CD4-positive, alpha-beta memory T cell (primary cell): ENCODE measurements at regions of chr17 and their contacts with region 1.

Region 1: DNA sequence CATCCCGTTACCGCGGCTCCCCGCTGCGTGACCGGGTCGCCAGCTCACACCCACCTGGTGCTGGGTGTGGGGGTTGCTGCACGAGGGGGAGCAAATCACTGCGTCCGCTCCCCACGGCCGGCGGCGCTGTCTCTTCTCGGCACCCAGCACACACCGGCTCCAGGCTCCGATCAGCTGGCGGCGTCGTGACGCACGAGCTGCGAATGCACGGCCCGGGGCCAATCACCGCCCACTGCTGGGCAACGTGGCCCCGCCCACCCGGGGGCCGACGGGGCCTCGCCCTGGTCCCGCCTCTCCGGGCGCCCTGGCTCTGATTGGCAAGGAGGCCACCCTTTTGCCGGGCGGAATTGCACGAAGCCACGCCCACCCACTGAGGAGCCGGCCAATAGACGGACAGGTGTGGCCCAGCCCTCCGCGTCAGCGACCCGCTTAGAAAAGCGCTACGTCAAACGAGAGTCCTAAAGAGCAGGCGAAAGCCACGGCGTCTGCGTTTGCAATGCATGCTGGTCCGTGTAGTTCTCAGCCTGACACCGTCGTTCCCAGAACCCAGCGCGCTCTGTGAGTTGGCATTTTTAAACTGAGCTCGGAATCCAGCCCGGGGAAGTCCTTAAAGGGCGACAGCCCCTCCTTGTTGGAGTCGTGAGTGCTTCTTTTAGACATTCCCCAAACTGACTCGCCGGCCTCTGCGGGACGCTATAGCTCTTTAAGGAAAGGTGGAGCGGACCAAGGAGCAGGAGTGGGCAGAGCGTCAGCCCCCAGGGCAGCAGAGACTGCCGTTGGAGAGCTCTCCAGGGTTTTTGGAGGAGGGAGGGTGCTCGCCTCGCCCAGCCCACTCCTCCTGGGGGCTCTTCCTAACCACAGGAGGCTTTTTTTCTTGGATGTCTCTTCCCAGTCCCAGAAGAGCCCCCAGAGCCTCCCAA is 6.2 kb upstream of the TLCD2 start:
- DNase-seq: peak; percentile 100
- H3K4me3 ChIP-seq: peak overlapping the region; percentile 76 to 100
- H3K4me3 Mint-ChIP-seq: peak overlapping the region; percentile 90 to 96 (median 94)
- H3K27ac ChIP-seq: peak overlapping the region; percentile 89
- H3K27ac Mint-ChIP-seq: peak overlapping the region; percentile 89 to 98 (median 96)
- H3K4me1 ChIP-seq: peaks cover 31% of the 10 kb centered on the region
- H3K4me1 Mint-ChIP-seq: peaks cover 14 to 55% (median 35%) of the 10 kb centered on the region in 4 donors
- H3K27me3 ChIP-seq: no peaks in the 10 kb centered on the region
- H3K27me3 Mint-ChIP-seq: no peaks in the 10 kb centered on the region

Region 2: DNA sequence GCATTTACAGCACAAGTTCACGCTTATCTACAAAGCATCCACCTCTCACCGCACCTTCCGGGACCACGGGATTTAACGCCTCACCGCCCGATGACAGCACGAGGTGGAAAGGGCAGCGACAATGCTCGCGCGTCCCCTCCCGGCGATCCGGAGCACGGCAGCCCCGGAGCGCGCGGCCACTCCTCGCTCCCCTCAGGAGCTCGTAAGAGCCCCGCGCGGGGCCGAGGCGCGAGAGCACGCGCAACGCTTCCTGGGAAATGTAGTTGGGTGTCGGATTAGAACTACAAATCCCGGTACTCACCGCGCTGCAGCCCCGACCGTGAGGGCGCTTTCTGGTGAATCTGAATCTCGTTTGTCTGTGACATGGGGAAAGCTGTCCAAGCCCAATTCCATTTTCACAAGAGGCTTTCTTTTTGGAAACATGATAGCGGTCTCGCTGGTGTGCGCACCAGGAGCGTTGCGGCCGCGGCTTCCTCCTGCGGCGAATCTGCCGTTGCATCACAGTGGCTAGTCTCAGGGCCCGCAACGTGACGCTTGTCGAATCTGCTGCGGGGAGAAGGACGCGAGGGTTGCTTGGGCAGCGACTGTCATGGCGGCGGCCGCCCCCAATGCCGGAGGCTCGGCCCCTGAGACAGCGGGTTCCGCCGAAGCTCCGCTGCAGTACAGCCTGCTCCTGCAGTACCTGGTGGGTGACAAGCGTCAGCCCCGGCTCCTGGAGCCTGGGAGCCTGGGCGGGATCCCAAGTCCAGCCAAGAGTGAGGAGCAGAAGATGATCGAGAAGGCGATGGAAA is 719.6 kb before region 1 on chr17 and contains the start of gene TIMM22:
- CTCF ChIA-PET with region 1: no interaction called
- POLR2A ChIA-PET with region 1: no interaction called
- intact Hi-C with region 1: loop called (anchors 2 kb)
- DNase-seq: peak; percentile 94 to 95 (median 95)
- H3K4me3 ChIP-seq: peak within 1 kb of the TSS; percentile 84 to 99
- H3K4me3 Mint-ChIP-seq: peak within 1 kb of the TSS; percentile 96 to 99 (median 98)
- H3K27ac ChIP-seq: peak within 1 kb of the TSS; percentile 83
- H3K27ac Mint-ChIP-seq: peak within 1 kb of the TSS; percentile 96 to 99 (median 99)
- H3K4me1 ChIP-seq: peaks cover 18% of the 10 kb centered on the region
- H3K4me1 Mint-ChIP-seq: peaks cover 13 to 34% (median 22%) of the 10 kb centered on the region in 4 donors
- H3K27me3 ChIP-seq: no peaks in the 10 kb centered on the region
- H3K27me3 Mint-ChIP-seq: no peaks in the 10 kb centered on the region
- total RNA-seq, gene TIMM22: 12.3 to 13.2 TPM

Region 3: DNA sequence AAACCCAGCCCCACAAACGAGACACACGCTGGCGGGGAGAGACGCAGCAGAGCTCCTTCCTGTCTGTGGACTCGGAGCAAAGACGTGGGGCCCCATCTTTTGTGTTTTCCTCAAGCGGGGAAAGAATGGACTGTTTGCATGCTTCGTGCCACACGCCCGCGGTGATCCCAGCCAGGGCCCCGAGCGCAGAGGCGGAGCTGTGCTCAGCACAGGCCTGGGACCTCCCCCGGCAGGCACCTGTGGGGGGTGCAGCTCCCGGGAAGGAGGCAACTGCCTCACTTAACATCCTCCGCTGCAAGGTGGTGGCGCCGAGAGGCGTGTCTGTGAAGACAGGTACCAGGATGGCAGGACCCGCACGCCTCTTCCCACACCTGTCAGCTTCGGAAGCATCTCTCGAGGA is 417.7 kb before region 1 on chr17:
- CTCF ChIA-PET with region 1: no interaction called
- POLR2A ChIA-PET with region 1: no interaction called
- intact Hi-C with region 1: no loop called
- DNase-seq: peak; percentile 33 to 51 (median 41)
- H3K4me3 ChIP-seq: peak overlapping the region in 1 of 2 donors; percentile 25
- H3K4me3 Mint-ChIP-seq: peak overlapping the region; percentile 36 to 67 (median 52)
- H3K27ac ChIP-seq: no peak overlapping the region
- H3K27ac Mint-ChIP-seq: peak overlapping the region in 2 of 7 donors; percentile 15 to 35
- H3K4me1 ChIP-seq: peaks cover 58% of the 10 kb centered on the region
- H3K4me1 Mint-ChIP-seq: peaks cover 15 to 60% (median 32%) of the 10 kb centered on the region in 4 donors
- H3K27me3 ChIP-seq: no peaks in the 10 kb centered on the region
- H3K27me3 Mint-ChIP-seq: no peaks in the 10 kb centered on the region

Region 4: DNA sequence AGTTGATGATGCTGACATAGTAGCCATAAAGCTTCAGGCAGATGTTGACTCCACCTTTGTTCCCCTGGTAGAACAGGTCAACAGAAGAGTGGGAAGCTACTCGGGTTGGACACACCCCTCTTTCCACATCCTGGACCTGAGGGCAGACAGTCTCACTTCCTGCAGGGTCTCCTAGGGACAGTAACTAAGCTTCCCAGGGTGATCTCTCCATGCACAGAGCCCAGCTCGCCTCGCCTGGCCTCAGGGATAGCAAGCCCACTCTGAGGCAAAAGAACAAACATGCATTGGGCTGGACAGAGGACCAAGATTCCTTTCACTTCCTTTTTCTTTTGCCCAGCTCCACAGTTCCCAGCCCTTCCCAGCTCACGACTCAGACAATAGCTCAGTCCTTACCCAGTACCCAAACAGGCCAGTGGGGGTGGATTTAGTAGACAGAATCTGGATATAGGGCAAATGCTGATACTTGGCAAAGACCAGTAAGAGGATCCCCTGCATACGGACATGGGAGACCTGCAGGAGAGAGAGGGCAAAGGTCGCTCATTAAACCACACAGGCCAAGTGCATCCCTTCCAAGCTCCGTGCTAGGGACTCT is 206.9 kb before region 1 on chr17:
- CTCF ChIA-PET with region 1: no interaction called
- POLR2A ChIA-PET with region 1: no interaction called
- intact Hi-C with region 1: no loop called
- DNase-seq: no peak
- H3K4me3 ChIP-seq: no peak overlapping the region
- H3K4me3 Mint-ChIP-seq: no peak overlapping the region
- H3K27ac ChIP-seq: no peak overlapping the region
- H3K27ac Mint-ChIP-seq: peak overlapping the region in 4 of 7 donors; percentile 17 to 71 (median 56)
- H3K4me1 ChIP-seq: peaks cover 6% of the 10 kb centered on the region
- H3K4me1 Mint-ChIP-seq: peaks cover 7 to 26% (median 19%) of the 10 kb centered on the region in 4 donors
- H3K27me3 ChIP-seq: no peaks in the 10 kb centered on the region
- H3K27me3 Mint-ChIP-seq: no peaks in the 10 kb centered on the region

Region 5: DNA sequence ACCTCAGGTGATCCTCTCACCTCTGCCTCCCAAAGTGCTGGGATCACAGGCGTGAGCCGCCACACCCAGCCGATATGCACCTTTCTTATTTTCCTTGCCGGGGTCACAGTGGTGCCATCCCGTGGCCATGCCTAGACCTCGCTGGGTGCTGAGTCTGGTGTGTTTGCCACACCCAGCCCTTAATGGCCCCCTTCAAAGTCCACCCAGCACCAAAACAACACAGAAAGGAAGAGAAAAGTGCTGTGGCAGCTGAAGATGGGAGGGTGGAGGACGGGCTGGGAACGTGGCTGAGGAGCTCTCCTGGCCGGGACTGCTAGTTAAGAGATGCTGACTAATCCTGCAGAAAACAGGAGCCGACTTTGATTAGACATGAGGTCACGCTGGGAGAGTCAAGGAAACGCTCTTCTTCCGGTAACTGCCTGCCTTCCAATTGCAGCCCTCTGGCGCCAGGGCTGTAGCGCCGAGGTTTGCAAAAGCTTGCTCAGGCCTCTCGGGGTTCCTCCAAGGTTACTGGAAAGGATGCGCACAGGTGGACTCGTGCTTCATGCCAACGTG is 98.6 kb before region 1 on chr17:
- CTCF ChIA-PET with region 1: no interaction called
- POLR2A ChIA-PET with region 1: no interaction called
- intact Hi-C with region 1: no loop called
- DNase-seq: no peak
- H3K4me3 ChIP-seq: no peak overlapping the region
- H3K4me3 Mint-ChIP-seq: peak overlapping the region in 1 of 8 donors; percentile 11
- H3K27ac ChIP-seq: no peak overlapping the region
- H3K27ac Mint-ChIP-seq: no peak overlapping the region
- H3K4me1 ChIP-seq: no peaks in the 10 kb centered on the region
- H3K4me1 Mint-ChIP-seq: no peaks in the 10 kb centered on the region
- H3K27me3 ChIP-seq: no peaks in the 10 kb centered on the region
- H3K27me3 Mint-ChIP-seq: no peaks in the 10 kb centered on the region

Region 6: DNA sequence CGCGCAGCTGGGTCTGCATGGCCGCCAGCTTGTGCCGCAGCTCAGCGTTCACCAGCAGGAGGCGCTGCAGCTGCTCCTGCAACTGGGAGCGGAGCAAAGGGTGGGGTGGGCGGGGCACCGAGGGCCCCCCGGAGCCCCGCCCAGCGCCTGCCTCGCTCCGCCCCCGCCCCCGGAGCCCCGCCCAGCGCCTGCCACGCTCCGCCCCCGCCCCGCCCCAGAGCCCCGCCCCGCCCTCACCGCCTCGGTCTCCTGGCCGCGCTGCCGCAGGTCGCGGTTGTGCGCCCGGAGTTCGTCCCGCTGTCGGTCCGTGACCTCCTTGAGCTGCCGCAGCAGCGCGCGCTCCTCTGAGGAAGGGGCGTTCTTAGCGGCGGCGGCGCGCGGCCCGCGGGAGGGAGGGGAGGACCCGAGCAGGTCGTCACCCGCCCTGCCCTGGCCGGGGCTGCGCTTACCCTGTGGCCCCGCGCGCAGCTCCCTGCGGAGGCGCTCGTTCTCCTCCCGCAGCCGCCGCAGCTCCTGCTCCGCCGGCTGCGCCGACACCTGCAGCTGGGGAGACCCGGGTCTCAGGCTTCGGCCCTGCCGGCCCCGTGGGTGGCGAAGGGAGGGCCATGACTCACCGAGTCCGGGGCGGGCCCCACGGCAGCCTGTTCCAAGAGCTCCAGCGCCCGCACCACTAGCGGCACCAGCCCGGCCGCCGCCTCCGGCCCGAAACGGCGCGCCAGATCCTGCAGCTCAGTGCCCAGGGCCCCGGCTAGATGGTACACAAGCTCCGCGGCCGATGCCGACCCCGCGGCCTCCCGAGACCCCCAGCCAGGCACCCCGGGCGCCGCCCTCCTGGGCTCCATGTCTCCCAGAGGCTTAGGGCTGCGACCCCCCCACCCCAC is 67.1 kb before region 1 on chr17:
- CTCF ChIA-PET with region 1: interaction called, 7 read pairs
- POLR2A ChIA-PET with region 1: interaction called, 36 read pairs
- intact Hi-C with region 1: loop called (anchors 2 kb)
- DNase-seq: peak; percentile 92 to 95 (median 93)
- H3K4me3 ChIP-seq: peak overlapping the region in 1 of 2 donors; percentile 63
- H3K4me3 Mint-ChIP-seq: peak overlapping the region; percentile 24 to 78 (median 68)
- H3K27ac ChIP-seq: peak overlapping the region; percentile 53
- H3K27ac Mint-ChIP-seq: peak overlapping the region in 3 of 7 donors; percentile 35 to 90 (median 53)
- H3K4me1 ChIP-seq: peaks cover 23% of the 10 kb centered on the region
- H3K4me1 Mint-ChIP-seq: peaks cover 6 to 20% (median 12%) of the 10 kb centered on the region in 4 donors
- H3K27me3 ChIP-seq: no peaks in the 10 kb centered on the region
- H3K27me3 Mint-ChIP-seq: no peaks in the 10 kb centered on the region

Region 7: GRCh38 chr17:1684378-1685189 is 31.8 kb before region 1 on chr17 and contains the start of gene PRPF8:
- CTCF ChIA-PET with region 1: interaction called, 3 read pairs
- POLR2A ChIA-PET with region 1: interaction called, 79 read pairs
- intact Hi-C with region 1: loop called (anchors 1 kb)
- DNase-seq: peak; percentile 98 to 99 (median 99)
- H3K4me3 ChIP-seq: peak within 1 kb of the TSS; percentile 83 to 96
- H3K4me3 Mint-ChIP-seq: peak within 1 kb of the TSS; percentile 97 to 99 (median 99)
- H3K27ac ChIP-seq: peak within 1 kb of the TSS; percentile 96
- H3K27ac Mint-ChIP-seq: peak within 1 kb of the TSS; percentile 93 to 100 (median 99)
- H3K4me1 ChIP-seq: peaks cover 29% of the 10 kb centered on the region
- H3K4me1 Mint-ChIP-seq: peaks cover 32 to 56% (median 41%) of the 10 kb centered on the region in 4 donors
- H3K27me3 ChIP-seq: no peaks in the 10 kb centered on the region
- H3K27me3 Mint-ChIP-seq: no peaks in the 10 kb centered on the region
- total RNA-seq, gene PRPF8: 429 to 464 TPM

Region 8: DNA sequence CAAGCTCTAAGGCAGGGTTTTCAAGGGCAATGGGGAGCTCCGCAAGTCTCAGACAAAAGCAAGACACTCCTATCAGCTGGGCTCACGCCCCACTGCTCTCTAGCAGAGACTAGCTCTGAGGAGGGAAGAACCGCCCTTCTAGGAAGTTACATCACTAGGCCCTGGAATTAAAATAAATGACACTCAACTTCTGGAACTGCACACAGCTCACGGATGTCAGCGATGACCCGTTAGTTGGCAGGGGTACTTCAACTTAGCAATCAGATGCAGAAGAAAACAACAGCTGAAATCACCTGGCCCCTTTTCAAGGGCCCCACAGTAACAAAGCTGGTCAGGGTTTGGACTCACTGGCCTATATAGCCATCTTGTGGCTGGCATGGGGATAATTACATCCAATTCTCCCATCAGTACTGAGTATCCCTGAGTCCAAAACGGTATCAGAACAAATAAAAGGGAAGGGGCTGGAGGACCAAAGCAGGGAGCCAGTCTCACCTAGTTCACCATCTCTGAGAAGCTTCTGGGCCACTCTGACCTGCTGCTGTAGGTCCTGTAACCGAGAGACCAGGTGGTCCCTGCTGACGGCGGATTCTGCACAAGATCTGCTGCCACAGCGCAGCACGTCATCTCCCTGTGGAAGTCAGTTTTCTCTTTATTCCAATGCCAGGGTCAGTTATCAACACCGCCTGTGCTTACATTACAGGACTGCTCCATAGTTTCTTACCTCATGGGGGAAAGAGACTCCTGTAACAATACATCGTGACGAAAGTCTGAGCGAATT is 67.7 kb after region 1 on chr17:
- CTCF ChIA-PET with region 1: interaction called, 161 read pairs
- POLR2A ChIA-PET with region 1: interaction called, 19 read pairs
- intact Hi-C with region 1: loop called (anchors 1 kb)
- DNase-seq: peak in 4 of 5 donors; percentile 18 to 37 (median 31)
- H3K4me3 ChIP-seq: no peak overlapping the region
- H3K4me3 Mint-ChIP-seq: no peak overlapping the region
- H3K27ac ChIP-seq: no peak overlapping the region
- H3K27ac Mint-ChIP-seq: peak overlapping the region in 4 of 7 donors; percentile 10 to 74 (median 48)
- H3K4me1 ChIP-seq: no peaks in the 10 kb centered on the region
- H3K4me1 Mint-ChIP-seq: peaks cover 0 to 10% (median 1%) of the 10 kb centered on the region in 4 donors
- H3K27me3 ChIP-seq: no peaks in the 10 kb centered on the region
- H3K27me3 Mint-ChIP-seq: no peaks in the 10 kb centered on the region

Region 9: DNA sequence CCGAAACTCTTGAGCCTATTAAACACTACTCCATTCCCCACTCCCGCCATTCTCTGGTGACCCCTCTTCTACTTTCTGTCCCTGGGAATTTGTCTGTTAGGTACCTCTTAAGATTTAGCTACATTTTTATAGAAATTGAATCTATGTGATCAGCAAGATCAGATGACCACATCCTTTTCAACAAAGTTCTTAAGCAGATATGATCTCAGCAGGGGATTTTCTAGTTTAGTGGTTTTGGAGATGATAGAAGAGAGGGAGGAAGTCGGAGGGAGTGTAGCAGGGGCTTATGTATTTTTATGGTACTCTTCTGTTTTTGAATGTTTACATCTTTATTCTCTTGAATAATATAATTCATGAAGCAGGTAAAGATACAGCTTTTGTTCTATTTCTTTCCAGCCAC is 154.3 kb after region 1 on chr17:
- CTCF ChIA-PET with region 1: interaction called, 30 read pairs
- POLR2A ChIA-PET with region 1: interaction called, 16 read pairs
- intact Hi-C with region 1: loop called (anchors 1 kb)
- DNase-seq: peak; percentile 59 to 84 (median 76)
- H3K4me3 ChIP-seq: peak overlapping the region in 1 of 2 donors; percentile 12
- H3K4me3 Mint-ChIP-seq: peak overlapping the region; percentile 75 to 88 (median 84)
- H3K27ac ChIP-seq: peak overlapping the region; percentile 65
- H3K27ac Mint-ChIP-seq: peak overlapping the region; percentile 92 to 99 (median 98)
- H3K4me1 ChIP-seq: peaks cover 62% of the 10 kb centered on the region
- H3K4me1 Mint-ChIP-seq: peaks cover 46 to 75% (median 55%) of the 10 kb centered on the region in 4 donors
- H3K27me3 ChIP-seq: no peaks in the 10 kb centered on the region
- H3K27me3 Mint-ChIP-seq: no peaks in the 10 kb centered on the region

Region 10: DNA sequence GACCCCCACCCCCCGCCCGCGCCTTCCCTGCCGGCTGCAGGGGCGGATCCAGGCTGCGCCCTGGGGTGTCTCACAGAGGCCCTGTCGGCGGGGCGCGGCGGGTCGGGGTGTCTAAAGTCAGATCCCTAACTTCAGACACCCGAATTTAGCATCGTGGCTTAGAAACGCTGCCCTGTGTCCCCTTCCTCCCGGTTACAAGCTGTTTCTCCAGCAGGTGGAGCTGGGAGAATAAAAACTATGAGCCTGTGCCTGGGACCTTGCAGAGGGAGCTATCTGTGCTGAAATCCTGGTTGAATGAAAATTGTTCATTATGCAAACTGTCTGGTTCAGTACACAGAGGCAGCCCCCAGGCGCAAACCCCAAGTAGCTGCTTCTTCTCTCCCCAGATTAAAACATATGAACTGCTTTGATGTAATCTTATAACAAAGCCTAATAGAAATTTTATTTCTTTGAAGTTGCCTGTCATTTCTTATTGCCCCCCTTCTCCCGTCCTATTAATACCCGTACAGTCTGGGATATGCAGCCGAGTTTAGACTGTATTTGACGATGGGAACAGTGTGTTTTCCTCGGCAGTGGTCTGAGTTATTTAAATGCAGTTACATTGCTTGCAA is 192.5 kb after region 1 on chr17:
- CTCF ChIA-PET with region 1: no interaction called
- POLR2A ChIA-PET with region 1: no interaction called
- intact Hi-C with region 1: no loop called
- DNase-seq: peak in 4 of 5 donors; percentile 12 to 22 (median 18)
- H3K4me3 ChIP-seq: no peak overlapping the region
- H3K4me3 Mint-ChIP-seq: peak overlapping the region; percentile 26 to 65 (median 51)
- H3K27ac ChIP-seq: no peak overlapping the region
- H3K27ac Mint-ChIP-seq: no peak overlapping the region
- H3K4me1 ChIP-seq: peaks cover 14% of the 10 kb centered on the region
- H3K4me1 Mint-ChIP-seq: peaks cover 5 to 12% (median 8%) of the 10 kb centered on the region in 4 donors
- H3K27me3 ChIP-seq: peaks cover 20% of the 10 kb centered on the region
- H3K27me3 Mint-ChIP-seq: peaks cover 34 to 41% of the 10 kb centered on the region in 2 donors

Region 11: DNA sequence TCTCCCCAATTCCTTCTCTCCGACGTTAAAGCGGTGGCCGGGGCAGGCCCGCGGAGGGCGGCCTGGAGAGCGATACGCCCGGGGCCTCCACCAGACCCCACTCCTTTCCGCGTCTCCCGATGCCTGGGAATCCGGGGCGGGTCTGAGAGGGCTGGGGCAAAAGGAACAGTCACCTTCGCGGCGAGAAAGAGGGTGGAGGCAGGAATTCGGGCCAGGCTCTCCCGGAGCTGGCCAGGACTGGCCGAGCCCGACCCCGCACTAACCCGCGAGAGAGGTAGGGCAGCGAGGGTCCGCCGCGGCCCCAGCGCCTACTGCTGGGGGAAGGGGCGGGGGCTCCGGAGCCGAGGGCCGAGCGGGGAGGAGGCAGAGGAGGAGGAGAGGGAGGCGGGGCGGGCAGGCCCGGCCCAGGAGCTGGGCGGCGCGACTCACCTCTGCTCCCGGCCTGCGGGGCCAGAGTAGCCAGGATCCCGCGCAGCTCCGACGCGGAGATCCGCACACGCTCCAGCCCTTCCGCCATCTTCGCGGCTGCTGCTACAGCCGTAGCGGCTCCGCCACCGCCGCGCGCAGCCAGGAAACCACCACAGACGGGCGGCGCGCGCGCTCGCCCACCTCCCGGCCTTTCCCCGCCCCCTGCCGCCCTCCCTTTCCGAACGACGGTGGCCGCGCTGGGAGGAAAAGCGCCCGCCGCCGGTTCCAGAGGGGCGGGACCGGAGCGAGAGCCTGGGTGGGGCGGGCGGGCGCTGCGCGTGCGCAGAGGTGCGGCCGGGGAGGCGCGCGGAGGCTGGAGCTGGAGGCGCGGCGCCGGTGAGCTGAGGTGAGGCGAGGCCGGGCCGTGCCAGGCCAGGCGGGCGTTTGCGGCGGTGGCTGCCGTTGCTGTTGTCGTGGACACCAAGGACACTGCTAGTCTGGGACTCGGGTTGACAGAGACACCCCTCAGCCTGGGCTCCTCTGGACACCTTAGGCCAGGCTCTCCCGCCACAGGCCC is 587.2 kb after region 1 on chr17 and contains the starts of genes SMG6 and SRR:
- CTCF ChIA-PET with region 1: no interaction called
- POLR2A ChIA-PET with region 1: no interaction called
- intact Hi-C with region 1: loop called (anchors 2 kb)
- DNase-seq: peak; percentile 93 to 94 (median 93)
- H3K4me3 ChIP-seq: peak within 1 kb of the TSS; percentile 84 to 94
- H3K4me3 Mint-ChIP-seq: peak within 1 kb of the TSS; percentile 92 to 95 (median 93)
- H3K27ac ChIP-seq: peak within 1 kb of the TSS; percentile 88
- H3K27ac Mint-ChIP-seq: peak within 1 kb of the TSS; percentile 90 to 93 (median 91)
- H3K4me1 ChIP-seq: peaks cover 26% of the 10 kb centered on the region
- H3K4me1 Mint-ChIP-seq: peaks cover 24 to 59% (median 41%) of the 10 kb centered on the region in 4 donors
- H3K27me3 ChIP-seq: no peaks in the 10 kb centered on the region
- H3K27me3 Mint-ChIP-seq: no peaks in the 10 kb centered on the region
- total RNA-seq, gene SMG6: 51.1 to 58.5 TPM
- total RNA-seq, gene SRR: 6.9 to 13.1 TPM